A673 (cell line): ENCODE measurements at regions of chrX and their contacts with region 1.

Region 1: GRCh38 chrX:53594354-53594753 is 92.2 kb downstream of the HUWE1 start:
- DNase-seq: no peak
- H3K4me3 ChIP-seq: no peak overlapping the region
- H3K27ac ChIP-seq: no peak overlapping the region
- H3K4me1 ChIP-seq: peaks cover 19% of the 10 kb centered on the region
- H3K27me3 ChIP-seq: no peaks in the 10 kb centered on the region
- CTCF ChIP-seq: no peak

Region 2: GRCh38 chrX:53616946-53617345 is 22.6 kb after region 1 on chrX:
- CTCF ChIA-PET with region 1: no interaction called
- POLR2A ChIA-PET with region 1: no interaction called
- intact Hi-C with region 1: loop called (anchors 1 kb)
- DNase-seq: peak; percentile 77
- H3K4me3 ChIP-seq: no peak overlapping the region
- H3K27ac ChIP-seq: no peak overlapping the region
- H3K4me1 ChIP-seq: peaks cover 13% of the 10 kb centered on the region
- H3K27me3 ChIP-seq: no peaks in the 10 kb centered on the region
- CTCF ChIP-seq: no peak